Activated T-helper 2 cell treated with anti-CD3 and anti-CD28 coated beads, Interferon-gamma antibody, Interleukin-2, Interleukin-4, amounts not matched to agents 10 μg/mL and 5 μg/mL and 100 μg/mL, durations not matched to agents 14 hours and 24 hours and 36 hours (primary cell): ENCODE measurements at regions of chr21 and their contacts with region 1.

Region 1: GRCh38 chr21:32569261-32570230 is 15.8 kb downstream of the TCP10L start:
- DNase-seq: peak; percentile 70
- H3K4me3 Mint-ChIP-seq: peak overlapping the region; percentile 86
- H3K27ac Mint-ChIP-seq: peak overlapping the region; percentile 19
- H3K4me1 Mint-ChIP-seq: peaks cover 16% of the 10 kb centered on the region
- H3K27me3 Mint-ChIP-seq: peaks cover 10% of the 10 kb centered on the region

Region 2: GRCh38 chr21:32403201-32403777 is 166.3 kb before region 1 on chr21:
- intact Hi-C with region 1: loop called (anchors 1 kb)
- DNase-seq: peak; percentile 24
- H3K4me3 Mint-ChIP-seq: no peak overlapping the region
- H3K27ac Mint-ChIP-seq: no peak overlapping the region
- H3K4me1 Mint-ChIP-seq: peaks cover 6% of the 10 kb centered on the region
- H3K27me3 Mint-ChIP-seq: peaks cover 19% of the 10 kb centered on the region

Region 3: GRCh38 chr21:32494934-32495703 is 74.4 kb before region 1 on chr21:
- intact Hi-C with region 1: loop called (anchors 2 kb)
- DNase-seq: no peak
- H3K4me3 Mint-ChIP-seq: no peak overlapping the region
- H3K27ac Mint-ChIP-seq: no peak overlapping the region
- H3K4me1 Mint-ChIP-seq: no peaks in the 10 kb centered on the region
- H3K27me3 Mint-ChIP-seq: no peaks in the 10 kb centered on the region

Region 4: DNA sequence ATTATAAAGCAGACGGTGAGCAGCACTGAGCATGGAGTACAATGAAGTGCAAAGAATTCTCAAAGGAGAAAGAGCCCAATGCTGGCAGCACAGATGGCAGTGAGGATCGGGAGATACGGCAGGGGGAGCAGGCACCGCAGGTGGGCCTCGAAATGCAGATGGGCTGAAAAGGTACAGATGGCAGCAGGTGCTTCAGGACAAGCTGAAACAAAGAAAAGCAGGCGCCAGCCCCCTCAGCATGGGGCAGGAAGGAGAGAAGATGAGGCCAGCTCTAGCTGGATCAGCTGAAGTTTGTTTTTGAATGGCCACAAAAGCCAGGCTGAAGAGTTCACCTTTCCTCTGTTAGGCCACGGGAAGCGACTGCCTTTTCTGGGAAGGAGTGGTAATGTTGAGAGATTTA is 34.9 kb after region 1 on chr21:
- intact Hi-C with region 1: loop called (anchors 5 kb)
- DNase-seq: no peak
- H3K4me3 Mint-ChIP-seq: no peak overlapping the region
- H3K27ac Mint-ChIP-seq: no peak overlapping the region
- H3K4me1 Mint-ChIP-seq: no peaks in the 10 kb centered on the region
- H3K27me3 Mint-ChIP-seq: no peaks in the 10 kb centered on the region

Region 5: GRCh38 chr21:32653311-32653901 is 83.9 kb after region 1 on chr21:
- intact Hi-C with region 1: no loop called
- DNase-seq: no peak
- H3K4me3 Mint-ChIP-seq: no peak overlapping the region
- H3K27ac Mint-ChIP-seq: no peak overlapping the region
- H3K4me1 Mint-ChIP-seq: peaks cover 24% of the 10 kb centered on the region
- H3K27me3 Mint-ChIP-seq: no peaks in the 10 kb centered on the region